ENCODE measurements at regions of chr6 and their contacts with region 1.

Region 1: GRCh38 chr6:63663147-63663877 is 27.7 kb downstream of the PHF3 start:
- DNase-seq: no peak
- ATAC-seq: no peak
- H3K4me3 Mint-ChIP-seq: no peak overlapping the region
- H3K27ac Mint-ChIP-seq: peak overlapping the region; percentile 37
- H3K4me1 Mint-ChIP-seq: peaks cover 68% of the 10 kb centered on the region
- H3K27me3 Mint-ChIP-seq: no peaks in the 10 kb centered on the region
- CTCF ChIP-seq: no peak

Region 2: DNA sequence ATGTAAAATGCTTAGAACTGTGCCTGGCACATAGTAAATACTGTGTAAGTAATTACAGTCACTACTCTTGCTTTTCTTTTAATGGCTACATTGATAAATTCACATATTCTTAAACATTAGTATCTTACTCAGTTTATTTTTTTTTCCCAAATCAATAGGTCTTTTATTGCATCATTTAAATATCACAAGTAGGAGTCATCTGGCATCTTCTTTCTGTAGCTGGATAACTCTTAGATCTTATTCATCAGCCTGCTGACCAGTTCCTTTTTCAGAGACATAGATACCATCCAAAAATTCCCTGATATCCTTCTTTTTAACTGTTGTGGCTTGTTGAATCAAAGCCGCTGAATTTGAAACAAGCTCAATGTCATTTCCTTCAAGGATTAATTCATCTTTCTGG is 47.7 kb before region 1 on chr6:
- CTCF ChIA-PET with region 1: no interaction called
- POLR2A ChIA-PET with region 1: no interaction called
- intact Hi-C with region 1: no loop called
- DNase-seq: no peak
- ATAC-seq: no peak
- H3K4me3 Mint-ChIP-seq: no peak overlapping the region
- H3K27ac Mint-ChIP-seq: no peak overlapping the region
- H3K4me1 Mint-ChIP-seq: no peaks in the 10 kb centered on the region
- H3K27me3 Mint-ChIP-seq: peaks cover 13% of the 10 kb centered on the region
- CTCF ChIP-seq: no peak

Region 3: DNA sequence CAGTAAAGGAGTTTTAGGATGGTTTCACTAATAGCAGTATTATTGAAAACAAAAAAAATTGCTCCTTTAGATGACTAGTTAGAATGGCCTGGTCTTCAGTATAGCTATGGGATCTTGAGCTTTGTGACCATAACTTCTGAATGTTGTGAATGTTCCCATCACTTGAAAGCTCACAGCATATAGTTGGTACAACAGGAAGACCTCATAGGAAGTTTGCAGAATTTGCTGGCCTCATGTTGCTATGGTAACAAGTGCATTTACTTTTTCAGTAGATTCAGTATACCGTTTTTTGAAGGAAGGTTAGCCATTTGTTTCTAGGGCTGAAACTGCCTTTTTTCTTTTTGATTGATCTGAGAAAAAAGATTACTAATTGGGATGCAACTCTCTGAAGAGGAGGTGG is 19.4 kb before region 1 on chr6:
- CTCF ChIA-PET with region 1: no interaction called
- POLR2A ChIA-PET with region 1: interaction called, 6 read pairs
- intact Hi-C with region 1: loop called (anchors 2 kb)
- DNase-seq: no peak
- ATAC-seq: no peak
- H3K4me3 Mint-ChIP-seq: no peak overlapping the region
- H3K27ac Mint-ChIP-seq: peak overlapping the region; percentile 7
- H3K4me1 Mint-ChIP-seq: peaks cover 74% of the 10 kb centered on the region
- H3K27me3 Mint-ChIP-seq: no peaks in the 10 kb centered on the region
- CTCF ChIP-seq: no peak

Region 4: DNA sequence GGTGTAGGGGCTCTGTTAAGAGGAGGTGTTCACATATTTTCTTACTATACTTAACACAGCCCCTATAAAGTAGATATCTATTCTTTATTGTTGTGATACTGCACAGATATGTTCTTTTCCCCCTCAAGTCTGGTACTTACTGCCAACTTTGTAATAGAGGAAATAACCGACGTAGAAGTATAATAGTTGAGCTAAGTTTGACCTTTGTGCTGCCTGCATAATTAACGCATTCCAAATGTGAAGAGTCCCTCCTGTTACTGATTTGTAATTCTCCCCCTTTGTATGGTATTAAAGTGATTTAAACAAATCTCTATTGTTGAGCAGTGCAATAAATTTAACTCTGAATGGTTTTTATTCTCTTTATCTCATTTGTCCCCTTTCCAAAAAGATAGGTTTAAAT is 11.3 kb after region 1 on chr6:
- CTCF ChIA-PET with region 1: no interaction called
- POLR2A ChIA-PET with region 1: no interaction called
- intact Hi-C with region 1: no loop called
- DNase-seq: no peak
- ATAC-seq: no peak
- H3K4me3 Mint-ChIP-seq: no peak overlapping the region
- H3K27ac Mint-ChIP-seq: no peak overlapping the region
- H3K4me1 Mint-ChIP-seq: peaks cover 44% of the 10 kb centered on the region
- H3K27me3 Mint-ChIP-seq: no peaks in the 10 kb centered on the region
- CTCF ChIP-seq: no peak

Region 5: DNA sequence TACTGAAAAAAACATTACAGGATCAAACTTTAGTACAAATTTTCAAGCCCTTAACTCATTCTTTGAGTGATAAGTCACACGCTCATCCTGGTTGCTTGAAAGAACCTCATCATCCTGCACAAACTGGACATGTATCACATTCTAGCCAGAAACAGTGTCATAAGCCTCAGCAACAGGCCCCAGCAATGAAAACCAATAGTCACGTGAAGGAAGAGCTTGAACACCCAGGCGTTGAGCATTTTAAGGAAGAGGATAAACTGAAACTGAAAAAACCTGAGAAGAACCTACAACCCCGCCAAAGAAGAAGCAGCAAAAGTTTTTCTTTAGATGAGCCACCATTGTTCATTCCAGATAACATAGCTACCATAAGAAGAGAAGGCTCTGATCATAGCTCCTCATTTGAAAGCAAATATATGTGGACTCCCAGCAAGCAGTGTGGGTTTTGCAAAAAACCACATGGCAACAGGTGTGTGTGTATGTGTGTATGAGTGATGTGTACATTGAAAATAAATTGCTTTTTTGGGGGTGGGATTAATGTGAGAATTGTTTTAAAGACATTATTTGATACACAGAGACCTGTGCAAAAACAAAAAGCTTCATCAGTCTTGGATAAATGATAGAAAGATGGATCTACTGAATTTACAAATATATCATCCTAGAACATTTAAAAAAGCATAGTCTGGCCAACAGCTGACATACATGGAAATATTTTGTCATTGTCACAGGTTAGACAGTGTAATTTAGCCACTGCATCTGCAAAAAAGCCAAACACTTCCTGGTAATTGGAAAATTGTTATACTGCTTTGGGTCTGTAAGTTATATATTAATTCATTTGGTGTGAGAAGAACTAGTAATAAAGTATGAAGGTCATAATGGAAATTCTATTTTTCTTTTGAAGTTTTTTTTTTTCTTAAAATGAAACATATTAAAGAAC is 22.4 kb after region 1 on chr6:
- CTCF ChIA-PET with region 1: no interaction called
- POLR2A ChIA-PET with region 1: interaction called, 3 read pairs
- intact Hi-C with region 1: loop called (anchors 2 kb)
- DNase-seq: no peak
- ATAC-seq: peak; percentile 89
- H3K4me3 Mint-ChIP-seq: peak overlapping the region; percentile 13
- H3K27ac Mint-ChIP-seq: peak overlapping the region; percentile 77
- H3K4me1 Mint-ChIP-seq: peaks cover 45% of the 10 kb centered on the region
- H3K27me3 Mint-ChIP-seq: no peaks in the 10 kb centered on the region
- CTCF ChIP-seq: no peak

Region 6: DNA sequence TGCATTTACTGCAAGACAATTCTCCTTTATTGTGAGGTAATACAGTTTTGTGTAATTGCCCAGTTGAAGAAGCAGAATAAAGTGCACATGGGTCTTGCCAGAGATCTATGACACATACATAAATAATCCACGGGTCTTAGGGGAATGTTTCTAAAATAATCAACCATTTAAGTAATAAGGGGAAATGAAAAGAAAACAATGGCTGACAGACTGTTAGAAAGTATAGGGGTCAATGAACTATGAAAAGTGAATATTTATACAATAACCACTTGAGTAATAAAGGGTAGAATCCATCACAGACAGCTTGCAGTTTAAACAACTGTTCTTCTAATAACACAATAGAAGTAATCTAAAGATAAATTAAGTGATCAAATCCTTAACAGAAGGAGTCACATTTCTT is 1566.5 kb after region 1 on chr6:
- CTCF ChIA-PET with region 1: no interaction called
- POLR2A ChIA-PET with region 1: no interaction called
- intact Hi-C with region 1: no loop called
- DNase-seq: no peak
- ATAC-seq: no peak
- H3K4me3 Mint-ChIP-seq: no peak overlapping the region
- H3K27ac Mint-ChIP-seq: no peak overlapping the region
- H3K4me1 Mint-ChIP-seq: no peaks in the 10 kb centered on the region
- H3K27me3 Mint-ChIP-seq: no peaks in the 10 kb centered on the region
- CTCF ChIP-seq: no peak

Measured in activated B cell treated with CpG ODN at 0.5 μM for 24 hours (primary cell).